Activated B cell treated with CpG ODN at 0.5 μM for 24 hours (primary cell): ENCODE measurements at regions of chr9 and their contacts with region 1.

Region 1: DNA sequence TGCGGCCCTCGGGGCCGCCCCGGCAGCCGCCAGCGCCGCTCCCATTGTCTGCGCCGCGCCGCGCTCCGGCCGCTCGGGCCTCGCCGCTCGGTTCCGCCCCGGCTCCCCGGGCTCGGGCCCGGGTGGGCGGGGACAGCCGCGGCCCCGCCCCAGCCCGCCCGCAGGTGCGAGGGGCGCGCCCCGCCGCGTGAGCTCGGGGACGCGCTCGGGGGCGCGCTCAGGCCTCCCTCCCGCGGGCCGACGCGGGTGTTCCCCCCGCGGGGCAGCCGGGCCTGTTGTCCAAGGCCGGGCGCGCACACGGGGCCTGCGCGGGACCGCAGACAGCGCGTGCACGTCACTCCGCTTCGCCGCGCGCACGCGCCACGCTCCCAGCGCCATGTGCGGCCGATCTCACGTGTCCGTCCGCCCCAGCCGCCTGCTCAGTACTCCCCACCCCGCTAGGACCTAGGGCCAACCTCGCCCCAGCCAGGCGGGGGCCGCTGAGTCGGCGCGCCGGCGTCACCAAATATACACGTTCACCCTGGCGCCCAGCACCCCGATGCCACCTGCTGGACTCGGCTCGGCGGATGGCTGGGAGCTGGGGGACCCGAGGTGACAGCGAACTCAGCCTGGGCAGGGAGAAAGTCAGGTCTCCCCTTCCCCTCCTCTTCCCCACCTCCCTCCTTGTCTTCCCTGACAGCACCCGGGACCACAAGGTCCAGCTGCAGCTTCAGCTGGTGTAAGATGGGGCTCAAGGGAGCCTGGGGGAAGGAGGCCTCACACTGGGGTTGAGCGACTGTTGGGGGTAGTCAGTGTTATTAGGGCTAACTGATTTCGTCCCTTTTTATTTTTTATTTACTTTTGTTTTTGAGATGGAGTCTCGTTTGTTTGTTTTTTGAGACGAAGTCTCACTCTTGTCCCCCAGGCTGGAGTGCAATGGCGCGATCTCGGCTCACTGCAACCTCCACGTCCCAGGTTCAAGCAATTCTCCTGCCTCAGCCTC is 14.3 kb downstream of the GBGT1 start:
- DNase-seq: peak; percentile 83
- ATAC-seq: peak; percentile 71
- H3K4me3 Mint-ChIP-seq: peak overlapping the region; percentile 78
- H3K27ac Mint-ChIP-seq: peak overlapping the region; percentile 71
- H3K4me1 Mint-ChIP-seq: peaks cover 39% of the 10 kb centered on the region
- H3K27me3 Mint-ChIP-seq: no peaks in the 10 kb centered on the region
- CTCF ChIP-seq: no peak

Region 2: DNA sequence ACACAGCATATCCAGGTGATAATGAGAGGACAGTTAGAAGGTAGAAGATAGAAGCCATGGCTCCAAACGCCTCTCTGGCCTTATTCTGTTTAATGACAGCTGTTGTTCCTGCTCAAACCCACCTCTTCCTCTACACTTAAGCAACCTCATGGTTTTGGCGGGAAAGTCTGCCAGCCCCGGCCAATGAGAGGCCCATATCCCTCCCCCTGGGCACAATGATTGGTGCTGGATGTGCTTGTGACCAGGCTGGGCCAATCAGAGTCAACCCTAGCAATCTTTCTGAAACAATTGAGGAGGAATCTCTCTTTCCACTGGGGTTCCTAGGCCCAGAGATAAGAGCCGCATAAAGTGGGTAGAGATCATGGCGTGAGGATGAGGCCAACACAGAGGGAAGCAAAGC is 175.7 kb before region 1 on chr9:
- CTCF ChIA-PET with region 1: interaction called, 6 read pairs
- POLR2A ChIA-PET with region 1: no interaction called
- intact Hi-C with region 1: loop called (anchors 1 kb)
- DNase-seq: no peak
- ATAC-seq: no peak
- H3K4me3 Mint-ChIP-seq: no peak overlapping the region
- H3K27ac Mint-ChIP-seq: no peak overlapping the region
- H3K4me1 Mint-ChIP-seq: peaks cover 13% of the 10 kb centered on the region
- H3K27me3 Mint-ChIP-seq: peaks cover 18% of the 10 kb centered on the region
- CTCF ChIP-seq: no peak

Region 3: DNA sequence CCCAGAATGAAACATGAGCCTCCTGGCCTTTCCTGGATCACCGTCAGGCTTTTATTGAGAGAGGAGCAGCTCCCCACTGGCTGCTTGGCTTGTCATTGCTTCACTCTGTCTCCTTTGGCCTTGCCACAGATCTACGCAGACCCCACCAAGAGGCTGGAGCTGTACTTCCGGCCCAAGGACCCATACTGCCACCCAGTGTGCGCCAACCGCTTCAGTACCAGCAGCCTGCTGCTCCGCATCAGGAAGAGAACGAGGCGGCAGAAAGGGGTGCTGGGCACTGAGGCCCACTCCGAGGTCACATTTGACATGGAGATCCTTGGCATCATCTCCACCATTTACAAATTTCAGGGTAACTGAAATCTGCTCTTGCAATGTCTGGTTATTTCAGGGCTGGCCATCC is 107.5 kb before region 1 on chr9:
- CTCF ChIA-PET with region 1: interaction called, 9 read pairs
- POLR2A ChIA-PET with region 1: no interaction called
- intact Hi-C with region 1: loop called (anchors 1 kb)
- DNase-seq: no peak
- ATAC-seq: no peak
- H3K4me3 Mint-ChIP-seq: no peak overlapping the region
- H3K27ac Mint-ChIP-seq: no peak overlapping the region
- H3K4me1 Mint-ChIP-seq: no peaks in the 10 kb centered on the region
- H3K27me3 Mint-ChIP-seq: no peaks in the 10 kb centered on the region
- CTCF ChIP-seq: no peak

Region 4: GRCh38 chr9:133115448-133116345 is 33.7 kb before region 1 on chr9:
- CTCF ChIA-PET with region 1: interaction called, 369 read pairs
- POLR2A ChIA-PET with region 1: interaction called, 89 read pairs
- intact Hi-C with region 1: loop called (anchors 1 kb)
- DNase-seq: no peak
- ATAC-seq: peak; percentile 80
- H3K4me3 Mint-ChIP-seq: peak overlapping the region; percentile 61
- H3K27ac Mint-ChIP-seq: peak overlapping the region; percentile 83
- H3K4me1 Mint-ChIP-seq: peaks cover 75% of the 10 kb centered on the region
- H3K27me3 Mint-ChIP-seq: no peaks in the 10 kb centered on the region
- CTCF ChIP-seq: no peak

Region 5: GRCh38 chr9:133160742-133161546 is 11.5 kb after region 1 on chr9:
- CTCF ChIA-PET with region 1: interaction called, 5 read pairs
- POLR2A ChIA-PET with region 1: interaction called, 6 read pairs
- intact Hi-C with region 1: loop called (anchors 1 kb)
- DNase-seq: no peak
- ATAC-seq: peak; percentile 64
- H3K4me3 Mint-ChIP-seq: peak overlapping the region; percentile 41
- H3K27ac Mint-ChIP-seq: peak overlapping the region; percentile 46
- H3K4me1 Mint-ChIP-seq: peaks cover 26% of the 10 kb centered on the region
- H3K27me3 Mint-ChIP-seq: no peaks in the 10 kb centered on the region
- CTCF ChIP-seq: peak; percentile 54